ENCODE measurements at regions of chr11 and their contacts with region 1.

Region 1: DNA sequence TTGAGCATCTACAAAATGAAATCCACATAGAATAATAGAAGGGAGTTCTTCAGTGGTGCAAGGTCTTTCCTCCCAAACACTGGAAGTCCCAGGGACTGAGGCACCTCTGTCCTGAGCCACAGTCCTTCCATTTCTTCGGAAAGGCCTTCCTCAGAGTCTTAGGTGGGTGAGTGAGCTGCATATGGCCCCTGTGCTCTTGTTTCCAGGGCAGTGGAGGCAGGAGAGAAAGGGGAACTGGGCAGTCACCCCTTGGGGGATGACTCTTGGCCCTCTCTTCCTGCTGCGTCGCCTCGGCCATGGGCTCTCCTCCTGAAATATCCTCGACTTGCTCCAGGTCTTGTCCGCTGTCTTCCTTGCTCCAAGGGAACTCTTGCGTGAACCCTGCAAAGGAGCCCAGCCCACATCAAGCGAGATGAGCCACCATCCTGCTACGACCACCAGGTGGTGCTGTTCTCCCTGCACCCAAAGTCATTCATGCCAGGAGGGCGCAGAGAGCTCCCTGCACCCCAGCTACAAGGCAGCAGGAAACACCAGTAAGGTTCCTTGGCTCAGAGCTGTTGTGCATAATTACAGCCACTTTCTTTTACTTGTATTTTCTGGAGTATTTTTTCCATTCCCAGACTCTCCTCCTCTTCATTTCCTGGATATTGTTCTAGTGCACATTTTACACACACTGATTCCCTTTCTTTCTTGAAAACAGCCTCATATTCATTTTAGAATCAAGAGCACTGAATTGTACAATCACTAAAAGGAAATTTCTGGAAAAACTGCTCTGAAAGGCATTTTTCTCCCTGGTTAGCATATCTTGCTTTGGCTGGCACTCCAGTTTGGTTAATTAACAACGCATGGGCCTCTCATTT is 397.8 kb downstream of the OPCML start:
- ATAC-seq: peak; percentile 79 to 99 (median 94)
- H3K4me3 ChIP-seq: no peak overlapping the region
- H3K27ac ChIP-seq: no peak overlapping the region
- H3K4me1 ChIP-seq: peaks cover 5 to 30% of the 10 kb centered on the region in 2 donors

Region 2: DNA sequence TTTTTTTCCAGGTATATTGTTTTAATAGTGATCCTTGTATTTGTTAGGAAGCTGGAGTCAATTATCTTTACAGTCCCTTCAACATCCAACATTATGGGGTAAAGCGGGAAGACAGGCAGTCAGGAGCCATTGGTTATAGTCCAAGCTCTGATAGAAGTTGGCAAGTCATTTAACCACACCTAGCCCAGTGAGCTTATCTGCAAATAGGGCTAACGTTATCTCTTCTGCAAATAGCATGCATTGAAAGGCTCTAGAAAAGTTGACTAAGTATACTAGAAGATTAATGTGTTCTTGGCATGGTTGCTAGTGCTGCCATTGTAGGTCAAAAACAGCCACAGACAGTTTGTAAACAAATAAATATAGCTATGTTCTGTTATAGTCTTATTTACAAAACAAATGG is 122.9 kb before region 1 on chr11:
- in situ Hi-C with region 1: no loop called
- ATAC-seq: no peak
- H3K4me3 ChIP-seq: no peak overlapping the region
- H3K27ac ChIP-seq: no peak overlapping the region
- H3K4me1 ChIP-seq: peaks cover 4% of the 10 kb centered on the region in 2 donors

Region 3: DNA sequence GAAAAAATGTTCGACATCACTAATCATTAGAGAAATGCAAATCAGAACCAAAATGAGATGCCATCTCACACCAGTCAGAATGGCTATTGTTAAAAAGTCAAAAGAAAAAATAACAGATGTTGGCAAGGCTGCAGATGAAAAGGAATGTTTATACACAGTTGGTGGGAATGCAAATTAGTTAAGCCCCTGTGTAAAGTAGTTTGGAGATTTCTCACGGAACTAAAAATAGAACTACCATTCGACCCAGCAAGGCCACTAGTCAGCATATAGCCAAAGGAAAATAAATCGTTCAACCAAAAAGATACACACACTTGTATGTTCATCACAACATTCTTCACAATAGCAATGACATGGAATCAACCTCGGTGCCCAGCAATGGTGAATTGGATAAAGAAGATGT is 105.4 kb before region 1 on chr11:
- in situ Hi-C with region 1: no loop called
- ATAC-seq: peak in 5 of 8 experiments; percentile 48 to 84 (median 68)
- H3K4me3 ChIP-seq: no peak overlapping the region
- H3K27ac ChIP-seq: no peak overlapping the region
- H3K4me1 ChIP-seq: peaks cover 10 to 19% of the 10 kb centered on the region in 2 donors

Region 4: DNA sequence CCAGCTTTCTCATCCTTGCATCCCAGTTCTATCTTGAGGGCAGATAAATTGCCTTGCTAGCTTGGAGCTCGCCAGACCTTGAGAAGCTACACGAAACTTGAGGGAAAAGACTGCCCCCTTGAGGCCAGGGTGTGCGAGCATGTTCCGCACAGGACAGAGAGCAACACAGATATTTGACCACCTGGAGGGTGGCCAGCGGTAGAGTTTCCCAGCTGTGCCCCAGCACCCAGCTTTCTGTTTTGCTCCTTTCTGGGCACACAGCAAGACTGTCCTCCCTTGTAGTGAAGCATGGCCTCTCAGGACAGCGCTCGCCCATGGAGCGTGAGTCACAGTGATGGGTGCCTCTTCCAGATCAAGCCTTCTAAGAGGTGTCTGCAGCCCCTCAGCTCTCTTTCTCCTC is 687.2 kb after region 1 on chr11:
- in situ Hi-C with region 1: loop called in 3 of 9 experiments (anchors 25 kb)
- ATAC-seq: peak; percentile 67 to 91 (median 82)
- H3K4me3 ChIP-seq: no peak overlapping the region
- H3K27ac ChIP-seq: no peak overlapping the region
- H3K4me1 ChIP-seq: peaks cover 0 to 4% of the 10 kb centered on the region in 2 donors

Region 5: GRCh38 chr11:133834682-133835592 is 700.4 kb after region 1 on chr11:
- in situ Hi-C with region 1: loop called in 2 of 9 experiments (anchors 25 kb)
- ATAC-seq: peak; percentile 90 to 97 (median 94)
- H3K4me3 ChIP-seq: no peak overlapping the region
- H3K27ac ChIP-seq: no peak overlapping the region
- H3K4me1 ChIP-seq: peaks cover 0 to 2% of the 10 kb centered on the region in 2 donors

Measured in motor neuron (in vitro differentiated cells).